CD8-positive, alpha-beta T cell (primary cell): ENCODE measurements at regions of chr1 and their contacts with region 1.

Region 1: DNA sequence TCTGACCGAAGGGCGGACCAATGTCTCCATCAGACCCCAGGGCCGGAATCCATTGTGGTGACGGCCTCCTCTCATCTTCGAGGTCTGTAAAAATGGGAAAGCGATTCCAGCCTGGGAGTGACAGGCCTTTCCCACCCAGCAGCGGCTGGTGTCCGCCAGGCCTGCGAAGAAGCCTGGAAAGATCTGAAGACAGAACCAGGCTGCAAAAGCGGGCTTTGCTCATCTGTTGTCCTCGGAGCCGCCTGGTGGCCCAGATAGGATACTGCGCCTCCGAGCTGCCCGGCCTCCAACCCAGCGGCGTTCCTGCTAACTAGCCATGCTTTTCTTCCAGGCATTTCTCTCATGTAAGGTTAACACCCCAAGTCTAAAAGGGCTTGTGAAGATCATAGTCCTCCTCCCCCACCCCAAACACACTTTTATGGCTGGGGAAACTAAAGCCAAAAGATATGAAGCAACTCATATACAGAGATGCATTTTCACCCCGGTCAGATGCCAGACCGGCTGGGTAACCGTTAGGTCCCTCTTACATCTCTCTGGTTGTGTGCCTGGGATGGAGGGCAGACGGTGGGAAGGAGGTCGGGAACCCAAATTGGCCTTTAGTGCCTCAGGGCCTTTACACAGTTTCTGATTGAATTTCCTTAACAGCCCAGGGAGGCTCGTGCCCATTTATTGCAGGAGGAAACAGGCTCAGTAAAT is 1.9 kb upstream of the DHRS3 start:
- DNase-seq: peak; percentile 60 to 86 (median 79)
- ATAC-seq: peak; percentile 45
- H3K4me3 ChIP-seq: peak overlapping the region; percentile 90
- H3K4me3 Mint-ChIP-seq: peak overlapping the region; percentile 99
- H3K27ac ChIP-seq: no peak overlapping the region
- H3K27ac Mint-ChIP-seq: peak overlapping the region; percentile 69
- H3K4me1 ChIP-seq: peaks cover 33% of the 10 kb centered on the region
- H3K4me1 Mint-ChIP-seq: peaks cover 37% of the 10 kb centered on the region
- H3K27me3 ChIP-seq: no peaks in the 10 kb centered on the region
- H3K27me3 Mint-ChIP-seq: no peaks in the 10 kb centered on the region
- CTCF ChIP-seq: peak; percentile 97

Region 2: GRCh38 chr1:12177999-12178441 is 441.9 kb before region 1 on chr1:
- CTCF ChIA-PET with region 1: no interaction called
- POLR2A ChIA-PET with region 1: no interaction called
- intact Hi-C with region 1: loop called in 1 of 2 experiments (anchors 2 kb)
- DNase-seq: peak; percentile 77 to 97 (median 95)
- ATAC-seq: peak; percentile 68
- H3K4me3 ChIP-seq: peak overlapping the region; percentile 34 to 36
- H3K4me3 Mint-ChIP-seq: peak overlapping the region; percentile 82
- H3K27ac ChIP-seq: peak overlapping the region; percentile 71 to 94
- H3K27ac Mint-ChIP-seq: peak overlapping the region; percentile 99
- H3K4me1 ChIP-seq: peaks cover 75% of the 10 kb centered on the region
- H3K4me1 Mint-ChIP-seq: peaks cover 77% of the 10 kb centered on the region
- H3K27me3 ChIP-seq: no peaks in the 10 kb centered on the region
- H3K27me3 Mint-ChIP-seq: no peaks in the 10 kb centered on the region
- CTCF ChIP-seq: no peak

Region 3: GRCh38 chr1:12285496-12286143 is 334.3 kb before region 1 on chr1:
- CTCF ChIA-PET with region 1: no interaction called
- POLR2A ChIA-PET with region 1: no interaction called
- intact Hi-C with region 1: no loop called
- DNase-seq: no peak
- ATAC-seq: no peak
- H3K4me3 ChIP-seq: no peak overlapping the region
- H3K4me3 Mint-ChIP-seq: no peak overlapping the region
- H3K27ac ChIP-seq: no peak overlapping the region
- H3K27ac Mint-ChIP-seq: no peak overlapping the region
- H3K4me1 ChIP-seq: no peaks in the 10 kb centered on the region
- H3K4me1 Mint-ChIP-seq: peaks cover 22% of the 10 kb centered on the region
- H3K27me3 ChIP-seq: no peaks in the 10 kb centered on the region
- H3K27me3 Mint-ChIP-seq: no peaks in the 10 kb centered on the region
- CTCF ChIP-seq: no peak

Region 4: GRCh38 chr1:12314333-12314903 is 305.5 kb before region 1 on chr1:
- CTCF ChIA-PET with region 1: interaction called, 6 read pairs
- POLR2A ChIA-PET with region 1: no interaction called
- intact Hi-C with region 1: loop called (anchors 1 kb)
- DNase-seq: peak in 2 of 9 experiments; percentile 19 to 34
- ATAC-seq: peak; percentile 36
- H3K4me3 ChIP-seq: no peak overlapping the region
- H3K4me3 Mint-ChIP-seq: no peak overlapping the region
- H3K27ac ChIP-seq: no peak overlapping the region
- H3K27ac Mint-ChIP-seq: no peak overlapping the region
- H3K4me1 ChIP-seq: no peaks in the 10 kb centered on the region
- H3K4me1 Mint-ChIP-seq: no peaks in the 10 kb centered on the region
- H3K27me3 ChIP-seq: no peaks in the 10 kb centered on the region
- H3K27me3 Mint-ChIP-seq: no peaks in the 10 kb centered on the region
- CTCF ChIP-seq: peak; percentile 73

Region 5: DNA sequence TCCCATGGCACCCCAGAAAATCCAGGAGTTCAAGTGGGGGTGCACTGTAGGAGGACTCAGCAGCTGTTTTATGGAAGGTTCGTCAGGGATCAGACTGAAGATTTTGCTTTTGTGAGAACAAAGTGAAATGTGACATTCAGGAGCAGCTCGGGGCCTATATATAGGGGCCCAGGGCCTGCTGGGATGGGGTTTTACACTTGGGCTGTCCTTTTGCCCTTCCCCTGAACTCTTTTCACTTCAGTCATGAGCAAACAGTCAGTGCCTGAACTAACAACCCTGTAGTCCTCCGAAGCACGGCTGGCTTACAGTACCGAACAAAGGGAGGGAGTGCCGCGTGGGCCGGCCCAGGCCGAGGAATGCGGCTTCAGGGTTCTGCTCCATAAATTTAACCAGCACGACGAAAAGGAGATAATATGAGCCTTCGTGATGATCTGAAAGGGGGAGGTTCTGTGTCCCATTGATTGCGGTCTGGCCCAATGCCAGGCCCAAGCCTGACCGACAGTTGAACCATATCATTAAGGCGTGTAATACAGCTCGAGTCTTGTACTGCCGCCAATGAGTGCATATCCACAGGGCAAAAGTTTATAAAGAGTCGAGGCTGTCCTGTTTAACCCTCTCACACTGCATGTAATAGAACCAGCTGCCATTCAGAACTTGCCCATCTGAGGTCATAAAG is 141.9 kb before region 1 on chr1:
- CTCF ChIA-PET with region 1: interaction called, 6 read pairs
- POLR2A ChIA-PET with region 1: interaction called, 4 read pairs
- intact Hi-C with region 1: loop called in 1 of 2 experiments (anchors 10 kb)
- DNase-seq: peak in 2 of 9 experiments; percentile 40 to 54
- ATAC-seq: peak; percentile 19
- H3K4me3 ChIP-seq: no peak overlapping the region
- H3K4me3 Mint-ChIP-seq: peak overlapping the region; percentile 72
- H3K27ac ChIP-seq: peak overlapping the region; percentile 6 to 63
- H3K27ac Mint-ChIP-seq: peak overlapping the region; percentile 97
- H3K4me1 ChIP-seq: peaks cover 90% of the 10 kb centered on the region
- H3K4me1 Mint-ChIP-seq: peaks cover 90% of the 10 kb centered on the region
- H3K27me3 ChIP-seq: no peaks in the 10 kb centered on the region
- H3K27me3 Mint-ChIP-seq: no peaks in the 10 kb centered on the region
- CTCF ChIP-seq: no peak

Region 6: DNA sequence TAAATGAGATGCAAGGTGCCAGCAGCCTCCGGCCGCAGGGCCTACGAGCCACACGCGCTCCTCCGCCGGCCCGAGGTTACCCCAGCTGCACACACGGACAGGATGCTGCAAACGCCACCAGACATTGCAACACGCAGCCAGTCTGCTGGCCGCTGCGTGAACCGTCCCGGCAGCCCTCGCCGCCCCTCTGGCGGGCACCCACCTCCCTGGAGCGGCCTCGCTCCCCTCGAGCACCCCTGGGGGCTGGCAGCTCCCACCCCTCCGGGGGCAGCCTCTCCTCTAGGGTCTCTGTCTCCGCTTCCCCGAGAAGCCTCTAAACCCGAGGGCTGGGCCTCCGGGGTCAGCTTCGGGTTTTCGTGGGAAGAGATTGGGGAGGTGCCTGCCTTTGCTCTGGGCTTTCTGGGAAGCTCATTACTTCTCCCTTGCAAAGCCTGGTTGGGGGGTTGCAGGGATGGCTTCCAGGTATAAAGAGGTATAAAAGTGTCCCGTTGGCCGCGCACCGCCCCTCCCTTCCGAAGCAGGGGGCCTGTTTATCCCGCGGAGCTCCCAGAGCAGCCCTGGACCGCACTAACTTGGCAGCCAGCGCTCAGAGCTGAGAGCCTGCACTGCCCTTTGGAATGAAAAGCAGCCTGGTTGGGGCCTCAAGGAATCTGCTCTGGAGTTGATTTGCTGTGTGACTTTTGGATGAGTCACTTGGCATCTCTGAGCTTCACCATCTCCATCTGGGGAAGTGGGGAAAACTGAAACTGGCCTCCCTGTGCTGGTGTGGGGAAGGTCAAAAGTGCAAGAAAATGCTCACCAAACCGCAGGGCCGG is 23.7 kb before region 1 on chr1:
- CTCF ChIA-PET with region 1: interaction called, 174 read pairs
- POLR2A ChIA-PET with region 1: interaction called, 73 read pairs
- intact Hi-C with region 1: loop called (anchors 1 kb)
- DNase-seq: peak in 4 of 9 experiments; percentile 31 to 54 (median 37)
- ATAC-seq: peak; percentile 7
- H3K4me3 ChIP-seq: no peak overlapping the region
- H3K4me3 Mint-ChIP-seq: peak overlapping the region; percentile 56
- H3K27ac ChIP-seq: no peak overlapping the region
- H3K27ac Mint-ChIP-seq: peak overlapping the region; percentile 49
- H3K4me1 ChIP-seq: peaks cover 20% of the 10 kb centered on the region
- H3K4me1 Mint-ChIP-seq: peaks cover 42% of the 10 kb centered on the region
- H3K27me3 ChIP-seq: no peaks in the 10 kb centered on the region
- H3K27me3 Mint-ChIP-seq: no peaks in the 10 kb centered on the region
- CTCF ChIP-seq: no peak

Region 7: GRCh38 chr1:12658531-12659453 is 38.9 kb after region 1 on chr1:
- CTCF ChIA-PET with region 1: interaction called, 24 read pairs
- POLR2A ChIA-PET with region 1: interaction called, 3 read pairs
- intact Hi-C with region 1: loop called in 1 of 2 experiments (anchors 1 kb)
- DNase-seq: peak; percentile 43 to 83 (median 76)
- ATAC-seq: peak; percentile 82
- H3K4me3 ChIP-seq: no peak overlapping the region
- H3K4me3 Mint-ChIP-seq: no peak overlapping the region
- H3K27ac ChIP-seq: no peak overlapping the region
- H3K27ac Mint-ChIP-seq: no peak overlapping the region
- H3K4me1 ChIP-seq: no peaks in the 10 kb centered on the region
- H3K4me1 Mint-ChIP-seq: peaks cover 5% of the 10 kb centered on the region
- H3K27me3 ChIP-seq: peaks cover 0 to 5% of the 10 kb centered on the region in 2 experiments
- H3K27me3 Mint-ChIP-seq: peaks cover 5% of the 10 kb centered on the region
- CTCF ChIP-seq: peak; percentile 98